ENCODE measurements at regions of chr11 and their contacts with region 1.

Region 1: GRCh38 chr11:94897330-94897768 is 76.0 kb downstream of the CWC15 start:
- DNase-seq: no peak
- H3K4me3 Mint-ChIP-seq: no peak overlapping the region
- H3K27ac Mint-ChIP-seq: no peak overlapping the region
- H3K4me1 Mint-ChIP-seq: peaks cover 3% of the 10 kb centered on the region
- H3K27me3 Mint-ChIP-seq: peaks cover 7% of the 10 kb centered on the region

Region 2: GRCh38 chr11:94519478-94520084 is 377.8 kb before region 1 on chr11:
- intact Hi-C with region 1: loop called (anchors 1 kb)
- DNase-seq: no peak
- H3K4me3 Mint-ChIP-seq: no peak overlapping the region
- H3K27ac Mint-ChIP-seq: no peak overlapping the region
- H3K4me1 Mint-ChIP-seq: no peaks in the 10 kb centered on the region
- H3K27me3 Mint-ChIP-seq: peaks cover 32% of the 10 kb centered on the region

Region 3: GRCh38 chr11:94786264-94787126 is 110.9 kb before region 1 on chr11:
- intact Hi-C with region 1: loop called (anchors 1 kb)
- DNase-seq: no peak
- H3K4me3 Mint-ChIP-seq: no peak overlapping the region
- H3K27ac Mint-ChIP-seq: no peak overlapping the region
- H3K4me1 Mint-ChIP-seq: peaks cover 3% of the 10 kb centered on the region
- H3K27me3 Mint-ChIP-seq: peaks cover 17% of the 10 kb centered on the region

Region 4: DNA sequence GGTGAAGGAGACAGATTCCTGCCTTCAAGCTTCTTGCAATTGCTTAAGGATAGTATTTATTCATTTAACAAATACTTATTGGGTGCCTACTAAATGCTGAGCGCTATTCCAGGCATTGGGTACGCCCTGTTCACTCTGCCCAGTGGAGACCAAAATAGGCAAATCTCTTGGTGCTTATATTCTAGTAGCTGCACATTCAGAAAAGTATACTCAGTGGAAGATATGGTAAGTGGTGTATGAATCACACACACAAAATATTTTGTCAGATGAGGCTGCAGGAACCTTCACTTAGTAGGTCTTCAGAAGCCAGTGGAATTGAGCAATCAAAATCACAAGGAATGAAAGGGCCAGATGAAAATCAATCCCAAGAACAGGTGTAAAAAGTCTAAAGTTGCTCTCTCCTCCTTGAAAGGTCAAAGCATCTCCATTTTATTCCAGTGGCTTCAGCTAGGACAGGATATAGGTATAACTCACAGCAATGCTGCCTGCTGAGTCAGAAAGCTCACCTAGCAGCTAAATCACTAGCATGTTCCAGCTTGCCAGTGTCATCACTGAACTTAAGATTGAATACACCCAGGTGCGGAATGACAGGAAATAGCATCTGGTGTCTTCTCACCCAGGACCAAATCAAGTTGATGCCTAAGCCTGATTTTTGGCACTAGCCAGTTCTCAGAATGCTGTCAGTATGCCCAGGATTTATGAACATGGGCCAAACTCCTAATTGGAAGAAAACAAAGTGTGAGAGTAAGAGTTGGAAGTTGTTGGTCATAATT is 45.3 kb before region 1 on chr11:
- intact Hi-C with region 1: no loop called
- DNase-seq: no peak
- H3K4me3 Mint-ChIP-seq: no peak overlapping the region
- H3K27ac Mint-ChIP-seq: no peak overlapping the region
- H3K4me1 Mint-ChIP-seq: no peaks in the 10 kb centered on the region
- H3K27me3 Mint-ChIP-seq: no peaks in the 10 kb centered on the region

Region 5: DNA sequence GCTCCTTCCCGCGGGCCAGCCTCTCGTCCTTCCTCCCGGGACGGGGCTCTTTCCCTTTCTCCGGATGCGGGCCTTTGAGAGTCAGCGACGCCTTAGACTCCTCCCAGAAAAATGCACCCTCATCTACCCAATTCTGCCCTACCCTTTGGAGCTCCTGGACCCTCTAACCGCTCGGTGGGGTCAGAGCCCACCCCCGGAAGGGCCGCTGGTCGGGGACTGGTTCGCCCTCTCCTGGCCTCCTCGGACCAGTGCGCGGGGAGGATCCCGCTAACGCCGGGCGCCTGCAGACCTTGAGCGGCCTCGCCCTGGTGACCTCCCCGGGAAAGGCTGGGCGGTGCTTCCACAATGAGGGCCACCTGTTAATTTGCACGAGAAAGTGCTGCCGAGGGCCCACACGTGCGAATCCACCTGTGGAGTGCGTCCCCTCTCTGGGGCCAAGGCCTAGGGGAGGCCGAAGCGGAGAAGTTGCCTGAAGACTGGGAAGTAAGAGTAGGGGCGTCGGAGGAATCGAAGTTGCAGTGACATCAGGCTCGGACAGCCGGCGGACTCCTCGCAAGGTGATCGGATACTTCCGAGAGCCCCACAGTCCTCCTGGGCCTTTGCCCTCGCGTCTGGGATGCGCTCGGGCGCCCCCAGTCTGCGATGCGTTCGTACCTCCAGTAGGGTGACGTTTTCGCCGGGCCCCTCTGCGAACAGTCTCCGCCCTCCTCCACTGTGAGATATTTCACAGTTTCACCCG is 253.8 kb after region 1 on chr11:
- intact Hi-C with region 1: no loop called
- DNase-seq: peak; percentile 89
- H3K4me3 Mint-ChIP-seq: peak overlapping the region; percentile 87
- H3K27ac Mint-ChIP-seq: peak overlapping the region; percentile 92
- H3K4me1 Mint-ChIP-seq: peaks cover 51% of the 10 kb centered on the region
- H3K27me3 Mint-ChIP-seq: no peaks in the 10 kb centered on the region

Measured in activated T-helper 2 cell treated with anti-CD3 and anti-CD28 coated beads, Interferon-gamma antibody, Interleukin-2, Interleukin-4, amounts not matched to agents 10 μg/mL and 5 μg/mL and 100 μg/mL, durations not matched to agents 14 hours and 24 hours and 36 hours (primary cell).